ENCODE measurements at regions of chr14 and their contacts with region 1.

Region 1: DNA sequence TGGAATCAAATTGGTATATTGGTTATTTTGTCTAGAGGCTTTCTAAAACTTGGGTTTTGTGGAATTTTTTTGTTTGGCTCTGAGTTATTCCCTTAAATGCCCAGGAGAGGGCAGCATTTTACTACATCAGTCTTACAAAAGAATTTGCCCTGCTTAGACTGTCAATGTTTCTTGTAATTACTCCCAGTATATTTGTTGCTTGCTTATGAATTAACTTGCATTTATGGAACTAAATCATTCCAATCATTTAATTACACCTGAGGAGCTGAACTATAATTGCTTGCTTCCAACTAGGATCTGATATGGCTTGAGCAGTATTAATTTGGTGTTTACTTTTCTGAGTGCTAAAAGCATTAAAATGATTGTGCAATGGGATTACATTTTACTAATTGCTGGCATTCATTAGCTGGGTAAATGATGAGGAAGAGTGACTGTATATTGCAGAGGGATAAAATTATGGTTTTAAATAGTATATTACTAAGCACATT is 48.7 kb downstream of the MIPOL1 start:
- DNase-seq: peak; percentile 61
- H3K4me3 ChIP-seq: no peak overlapping the region
- H3K27ac ChIP-seq: no peak overlapping the region
- H3K4me1 ChIP-seq: no peaks in the 10 kb centered on the region
- H3K27me3 ChIP-seq: no peaks in the 10 kb centered on the region
- CTCF ChIP-seq: peak; percentile 79

Region 2: DNA sequence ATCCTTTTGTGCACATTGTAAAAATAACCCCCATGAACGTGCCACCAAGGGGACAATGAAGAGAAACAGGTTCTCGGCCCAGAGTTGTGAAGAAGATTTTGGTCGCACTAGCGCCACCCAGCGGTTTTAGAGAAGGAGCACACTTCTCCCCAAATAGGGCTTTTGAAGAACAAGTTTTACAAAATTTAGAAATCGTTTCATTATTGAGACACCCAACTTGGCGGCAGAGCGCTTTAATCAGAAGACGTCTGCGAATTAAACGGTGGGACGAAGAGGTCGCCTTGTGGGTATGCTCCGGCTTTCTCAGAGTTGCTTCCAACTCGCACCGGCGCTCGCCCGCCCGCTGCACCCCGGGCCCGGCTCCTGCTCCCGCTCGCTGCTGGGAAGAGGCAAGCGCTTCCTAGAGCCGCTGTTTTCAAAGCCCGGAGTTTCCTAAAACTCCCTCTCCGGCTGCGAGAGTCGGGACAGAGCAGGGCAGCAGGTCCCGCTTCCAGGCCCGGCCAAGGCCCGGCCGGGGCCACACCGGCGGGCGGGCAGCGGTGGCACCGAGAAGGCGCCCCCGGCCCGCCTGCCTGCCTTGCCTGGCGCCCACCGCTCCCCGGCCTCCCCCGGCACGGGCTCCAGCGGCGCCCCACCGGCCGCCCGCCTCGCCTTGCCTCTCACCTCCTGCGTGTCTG is 347.9 kb after region 1 on chr14:
- CTCF ChIA-PET with region 1: no interaction called
- POLR2A ChIA-PET with region 1: no interaction called
- intact Hi-C with region 1: loop called (anchors 1 kb)
- DNase-seq: peak; percentile 91
- H3K4me3 ChIP-seq: peak overlapping the region; percentile 68
- H3K27ac ChIP-seq: peak overlapping the region; percentile 65
- H3K4me1 ChIP-seq: peaks cover 12% of the 10 kb centered on the region
- H3K27me3 ChIP-seq: peaks cover 72% of the 10 kb centered on the region
- CTCF ChIP-seq: peak; percentile 91

Region 3: GRCh38 chr14:37709419-37710195 is 463.1 kb after region 1 on chr14:
- CTCF ChIA-PET with region 1: no interaction called
- POLR2A ChIA-PET with region 1: no interaction called
- intact Hi-C with region 1: loop called (anchors 10 kb)
- DNase-seq: peak; percentile 12
- H3K4me3 ChIP-seq: no peak overlapping the region
- H3K27ac ChIP-seq: no peak overlapping the region
- H3K4me1 ChIP-seq: no peaks in the 10 kb centered on the region
- H3K27me3 ChIP-seq: no peaks in the 10 kb centered on the region
- CTCF ChIP-seq: peak; percentile 57

Region 4: GRCh38 chr14:38629412-38629811 is 1382.9 kb after region 1 on chr14:
- CTCF ChIA-PET with region 1: no interaction called
- POLR2A ChIA-PET with region 1: no interaction called
- intact Hi-C with region 1: no loop called
- DNase-seq: no peak
- H3K4me3 ChIP-seq: no peak overlapping the region
- H3K27ac ChIP-seq: no peak overlapping the region
- H3K4me1 ChIP-seq: no peaks in the 10 kb centered on the region
- H3K27me3 ChIP-seq: no peaks in the 10 kb centered on the region
- CTCF ChIP-seq: no peak

Measured in A673 (cell line).